H1 (cell line): ENCODE measurements at regions of chr2 and their contacts with region 1.

Region 1: GRCh38 chr2:178193823-178194599 is at the start of gene OSBPL6:
- DNase-seq: peak in 1 of 2 experiments; percentile 76
- H3K4me3 ChIP-seq: peak within 1 kb of the TSS; percentile 64 to 92 (median 72)
- H3K27ac ChIP-seq: no peak within 1 kb of the TSS
- H3K4me1 ChIP-seq: no peaks in the 10 kb centered on the region; a peak in 1 of 7 replicates
- H3K27me3 ChIP-seq: peaks cover 9 to 40% (median 31%) of the 10 kb centered on the region in 4 experiments
- CTCF ChIP-seq: peak in 1 of 3 experiments; percentile 16; a peak in 1 of 4 replicates
- EP300 ChIP-seq: 0 out of 3 replicates have a peak, but pooled peaks of 1 of the 2 experiments have one; percentile 7
- POLR2A ChIP-seq: peak in 1 of 2 experiments; percentile 35; a peak in 2 of 3 replicates
- RAD21 ChIP-seq: no peak; a peak in 1 of 4 replicates
- total RNA-seq, gene OSBPL6: 5.6 and 7.2 TPM in 2 replicates

Region 2: DNA sequence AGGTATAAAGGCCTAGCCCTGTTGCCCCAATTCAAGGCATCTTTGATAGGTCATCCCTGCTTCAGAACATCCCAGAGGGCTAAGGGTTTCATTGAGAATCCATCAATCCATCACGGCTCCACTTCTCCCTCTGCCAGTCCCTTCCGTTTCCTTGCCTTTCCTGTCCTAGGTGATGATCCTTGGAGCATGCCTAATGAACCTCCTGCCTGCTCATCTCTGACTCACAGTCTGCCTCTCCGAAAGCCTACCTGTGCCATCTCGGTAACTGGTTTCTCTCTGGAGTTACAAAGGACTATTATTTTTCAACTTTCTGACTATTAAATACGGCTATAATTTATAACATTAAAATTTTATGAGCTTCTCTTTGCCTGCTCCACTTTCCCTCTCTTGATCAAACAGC is 36.4 kb before region 1 on chr2:
- CTCF ChIA-PET with region 1: no interaction called
- POLR2A ChIA-PET with region 1: no interaction called
- DNase-seq: no peak
- H3K4me3 ChIP-seq: no peak overlapping the region
- H3K27ac ChIP-seq: no peak overlapping the region
- H3K4me1 ChIP-seq: no peaks in the 10 kb centered on the region
- H3K27me3 ChIP-seq: no peaks in the 10 kb centered on the region
- CTCF ChIP-seq: no peak
- EP300 ChIP-seq: no peak
- POLR2A ChIP-seq: no peak
- RAD21 ChIP-seq: no peak

Region 3: DNA sequence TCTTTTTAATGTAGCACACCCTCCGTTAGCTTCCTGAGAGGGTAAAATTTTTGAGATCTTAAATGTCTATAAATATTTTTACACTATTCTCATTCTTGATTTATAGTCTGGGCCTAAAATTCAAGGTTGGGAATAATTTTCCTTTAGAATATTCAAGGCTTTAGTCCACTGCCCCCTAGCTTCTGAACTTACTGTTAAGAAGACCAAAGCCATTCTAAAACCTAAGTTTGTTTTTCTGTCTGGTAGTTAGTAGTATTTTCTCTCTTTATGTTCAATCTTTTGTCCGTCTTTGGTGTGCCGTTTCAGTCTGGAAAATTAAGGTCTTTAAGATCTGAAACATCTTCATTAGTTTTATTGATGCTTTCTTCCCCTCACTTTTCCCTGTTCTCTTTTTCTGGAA is 14.8 kb after region 1 on chr2:
- CTCF ChIA-PET with region 1: interaction called, 12 read pairs
- POLR2A ChIA-PET with region 1: interaction called, 6 read pairs
- DNase-seq: no peak
- H3K4me3 ChIP-seq: no peak overlapping the region
- H3K27ac ChIP-seq: no peak overlapping the region
- H3K4me1 ChIP-seq: peaks cover 0 to 19% (median 13%) of the 10 kb centered on the region in 4 experiments; a peak in 6 of 7 replicates
- H3K27me3 ChIP-seq: peaks cover 18 to 39% (median 29%) of the 10 kb centered on the region in 4 experiments
- CTCF ChIP-seq: peak in 1 of 3 experiments; percentile 16; a peak in 2 of 4 replicates
- EP300 ChIP-seq: no peak
- POLR2A ChIP-seq: no peak
- RAD21 ChIP-seq: peak in 1 of 2 experiments; percentile 13; a peak in 1 of 4 replicates

Region 4: GRCh38 chr2:178335230-178335629 is 141.2 kb after region 1 on chr2:
- CTCF ChIA-PET with region 1: no interaction called
- POLR2A ChIA-PET with region 1: no interaction called
- DNase-seq: no peak
- H3K4me3 ChIP-seq: no peak overlapping the region
- H3K27ac ChIP-seq: no peak overlapping the region
- H3K4me1 ChIP-seq: no peaks in the 10 kb centered on the region
- H3K27me3 ChIP-seq: no peaks in the 10 kb centered on the region
- CTCF ChIP-seq: no peak
- EP300 ChIP-seq: no peak
- POLR2A ChIP-seq: no peak
- RAD21 ChIP-seq: no peak